SK-N-SH (cell line): ENCODE measurements at regions of chr12 and their contacts with region 1.

Region 1: GRCh38 chr12:49567611-49568441 is at the start of gene MCRS1:
- DNase-seq: peak; percentile 96
- H3K4me3 ChIP-seq: peak within 1 kb of the TSS; percentile 90 to 99
- H3K27ac ChIP-seq: peak within 1 kb of the TSS; percentile 85 to 95
- H3K4me1 ChIP-seq: peaks cover 7 to 14% of the 10 kb centered on the region in 2 experiments; a peak in 3 of 4 replicates
- H3K27me3 ChIP-seq: no peaks in the 10 kb centered on the region
- CTCF ChIP-seq: no peak
- EP300 ChIP-seq: no peak
- RAD21 ChIP-seq: no peak
- polyA plus RNA-seq, gene MCRS1: 103 and 107 TPM in 2 replicates

Region 2: DNA sequence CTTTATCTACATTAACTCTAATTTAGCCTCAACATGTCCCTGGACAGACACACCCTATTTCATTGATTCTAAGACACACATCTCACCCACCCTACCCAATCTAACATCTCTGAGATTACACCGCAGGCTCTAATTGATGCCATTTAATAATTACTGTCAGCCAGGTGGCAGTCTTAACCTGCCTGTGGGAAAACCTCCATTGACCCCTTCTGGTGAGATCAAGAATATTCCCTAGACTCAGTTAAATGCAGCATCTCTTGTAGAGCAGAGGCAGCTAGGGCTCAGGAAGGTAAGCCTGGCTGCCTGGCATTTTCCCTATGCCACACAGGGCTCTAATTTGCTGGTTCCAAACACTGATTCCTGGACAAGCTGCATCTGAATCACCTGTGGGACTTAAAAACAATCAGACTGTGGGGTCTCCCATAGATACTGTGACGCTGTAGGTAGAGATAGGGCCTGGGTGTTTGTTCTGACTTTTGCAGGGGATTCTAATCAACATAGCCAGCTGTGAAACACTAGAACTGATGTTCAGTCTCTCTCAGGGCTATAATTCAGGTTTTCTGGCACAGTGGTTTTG is 14.2 kb before region 1 on chr12:
- CTCF ChIA-PET with region 1: interaction called, 20 read pairs
- POLR2A ChIA-PET with region 1: interaction called, 9 read pairs
- DNase-seq: peak; percentile 73
- H3K4me3 ChIP-seq: no peak overlapping the region
- H3K27ac ChIP-seq: no peak overlapping the region
- H3K4me1 ChIP-seq: no peaks in the 10 kb centered on the region; a peak in 1 of 4 replicates
- H3K27me3 ChIP-seq: no peaks in the 10 kb centered on the region
- CTCF ChIP-seq: peak; percentile 58
- EP300 ChIP-seq: no peak
- RAD21 ChIP-seq: peak; percentile 66